ENCODE measurements at regions of chr17 and their contacts with region 1.

Region 1: GRCh38 chr17:77882481-77883212 is 75.9 kb upstream of the TNRC6C start:
- DNase-seq: peak; percentile 18
- ATAC-seq: peak; percentile 55
- H3K4me3 ChIP-seq: no peak overlapping the region
- H3K27ac ChIP-seq: no peak overlapping the region
- H3K4me1 ChIP-seq: peaks cover 6% of the 10 kb centered on the region
- H3K27me3 ChIP-seq: peaks cover 11 to 82% of the 10 kb centered on the region in 2 experiments
- CTCF ChIP-seq: no peak
- EP300 ChIP-seq: no peak
- POLR2A ChIP-seq: no peak
- RAD21 ChIP-seq: no peak

Region 2: DNA sequence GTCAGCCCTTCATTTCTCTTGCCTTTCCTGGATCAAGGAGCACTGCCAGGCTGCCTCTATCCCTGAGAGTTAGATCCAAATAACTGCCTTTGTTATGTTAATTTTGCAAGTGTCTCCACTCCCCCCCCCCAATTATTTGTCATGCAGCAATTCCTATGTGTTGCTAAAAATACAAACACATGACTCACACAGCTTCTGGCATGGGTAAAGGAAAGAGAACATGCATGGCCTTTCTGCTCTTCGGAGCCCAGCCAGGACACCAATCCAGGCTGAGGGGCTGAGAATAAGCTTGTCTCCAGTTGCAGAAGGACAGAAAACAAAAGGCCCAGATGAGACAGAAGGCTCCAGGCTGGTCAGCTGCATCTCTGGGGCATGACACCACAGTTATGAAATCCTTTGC is 72.1 kb before region 1 on chr17:
- CTCF ChIA-PET with region 1: no interaction called
- POLR2A ChIA-PET with region 1: no interaction called
- in situ Hi-C with region 1: no loop called
- intact Hi-C with region 1: no loop called
- DNase-seq: no peak
- ATAC-seq: no peak
- H3K4me3 ChIP-seq: no peak overlapping the region
- H3K27ac ChIP-seq: no peak overlapping the region
- H3K4me1 ChIP-seq: no peaks in the 10 kb centered on the region
- H3K27me3 ChIP-seq: peaks cover 3 to 49% of the 10 kb centered on the region in 2 experiments; a peak in 4 of 5 replicates
- CTCF ChIP-seq: no peak
- EP300 ChIP-seq: no peak
- POLR2A ChIP-seq: no peak
- RAD21 ChIP-seq: no peak

Region 3: GRCh38 chr17:77824102-77824779 is 58.4 kb before region 1 on chr17:
- CTCF ChIA-PET with region 1: no interaction called
- POLR2A ChIA-PET with region 1: no interaction called
- in situ Hi-C with region 1: no loop called
- intact Hi-C with region 1: no loop called
- DNase-seq: no peak
- ATAC-seq: no peak
- H3K4me3 ChIP-seq: no peak overlapping the region
- H3K27ac ChIP-seq: no peak overlapping the region
- H3K4me1 ChIP-seq: peaks cover 23% of the 10 kb centered on the region
- H3K27me3 ChIP-seq: peaks cover 3 to 39% of the 10 kb centered on the region in 2 experiments; a peak in 4 of 5 replicates
- CTCF ChIP-seq: no peak
- EP300 ChIP-seq: no peak
- POLR2A ChIP-seq: no peak
- RAD21 ChIP-seq: no peak

Region 4: DNA sequence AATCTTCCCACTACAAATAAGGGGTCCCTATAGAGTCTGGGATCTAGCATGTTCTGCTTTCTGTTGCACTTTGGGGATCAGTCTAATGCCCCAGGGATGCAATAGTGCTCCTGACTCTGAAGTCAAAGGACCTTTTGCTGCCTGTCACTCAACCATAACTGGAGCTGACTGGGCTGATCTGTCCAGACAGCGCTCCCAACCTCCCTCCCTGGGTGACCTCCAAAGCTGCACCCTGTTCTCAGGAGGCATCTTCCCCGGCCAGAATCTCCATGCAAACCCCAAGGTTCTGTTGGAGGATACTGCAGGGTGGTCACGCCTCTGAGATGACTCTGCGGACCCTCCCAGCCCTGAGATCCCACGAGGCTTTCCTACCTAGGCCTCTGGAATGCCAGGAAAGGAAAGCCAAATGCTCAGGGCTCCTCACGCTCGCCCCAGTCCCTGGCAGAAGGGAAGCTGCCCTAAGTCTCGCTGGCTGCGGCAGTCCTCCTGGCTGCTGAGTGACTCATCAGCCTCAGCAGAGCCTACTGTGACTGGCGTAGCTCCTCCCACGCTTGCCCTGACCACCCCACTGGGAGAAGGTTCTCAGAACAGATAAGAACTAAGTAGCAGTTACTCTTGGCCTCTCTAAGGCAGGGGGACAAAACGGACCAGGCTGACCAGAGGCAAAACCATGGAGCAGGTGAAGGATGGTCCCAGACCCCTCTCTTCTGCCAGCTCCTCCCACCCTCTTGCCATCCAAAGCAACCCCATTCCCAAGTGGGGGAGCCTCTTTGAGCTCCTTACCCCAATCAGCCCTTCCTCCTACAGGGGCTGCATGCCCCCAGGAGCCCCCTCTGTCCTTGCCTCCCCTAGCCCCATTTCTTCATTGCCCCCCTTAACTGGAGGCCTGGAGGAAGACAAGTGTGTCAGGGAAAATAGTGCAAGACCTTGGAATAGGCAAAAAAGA is 48.2 kb before region 1 on chr17:
- CTCF ChIA-PET with region 1: no interaction called
- POLR2A ChIA-PET with region 1: no interaction called
- in situ Hi-C with region 1: no loop called
- intact Hi-C with region 1: loop called (anchors 1 kb)
- DNase-seq: peak; percentile 20
- ATAC-seq: peak; percentile 74
- H3K4me3 ChIP-seq: no peak overlapping the region
- H3K27ac ChIP-seq: no peak overlapping the region
- H3K4me1 ChIP-seq: no peaks in the 10 kb centered on the region
- H3K27me3 ChIP-seq: peaks cover 5 to 62% of the 10 kb centered on the region in 2 experiments
- CTCF ChIP-seq: no peak
- EP300 ChIP-seq: no peak
- POLR2A ChIP-seq: no peak
- RAD21 ChIP-seq: no peak

Region 5: GRCh38 chr17:77968788-77969187 is 86.1 kb after region 1 on chr17:
- CTCF ChIA-PET with region 1: no interaction called
- POLR2A ChIA-PET with region 1: no interaction called
- in situ Hi-C with region 1: no loop called
- intact Hi-C with region 1: no loop called
- DNase-seq: no peak
- ATAC-seq: no peak
- H3K4me3 ChIP-seq: no peak overlapping the region
- H3K27ac ChIP-seq: no peak overlapping the region
- H3K4me1 ChIP-seq: no peaks in the 10 kb centered on the region
- H3K27me3 ChIP-seq: no peaks in the 10 kb centered on the region
- CTCF ChIP-seq: no peak
- EP300 ChIP-seq: no peak
- POLR2A ChIP-seq: no peak
- RAD21 ChIP-seq: no peak

Measured in HepG2 (cell line).